Activated T-helper 1 cell treated with anti-CD3 and anti-CD28 coated beads, Interleukin-12 subunit alpha, Interleukin-12 subunit beta, Interleukin-2, Interleukin-4 antibody, amounts not matched to agents 30 ng/mL and 10 ng/mL and 1 ng/mL, durations not matched to agents 14 hours and 24 hours and 36 hours (primary cell): ENCODE measurements at regions of chr3 and their contacts with region 1.

Region 1: DNA sequence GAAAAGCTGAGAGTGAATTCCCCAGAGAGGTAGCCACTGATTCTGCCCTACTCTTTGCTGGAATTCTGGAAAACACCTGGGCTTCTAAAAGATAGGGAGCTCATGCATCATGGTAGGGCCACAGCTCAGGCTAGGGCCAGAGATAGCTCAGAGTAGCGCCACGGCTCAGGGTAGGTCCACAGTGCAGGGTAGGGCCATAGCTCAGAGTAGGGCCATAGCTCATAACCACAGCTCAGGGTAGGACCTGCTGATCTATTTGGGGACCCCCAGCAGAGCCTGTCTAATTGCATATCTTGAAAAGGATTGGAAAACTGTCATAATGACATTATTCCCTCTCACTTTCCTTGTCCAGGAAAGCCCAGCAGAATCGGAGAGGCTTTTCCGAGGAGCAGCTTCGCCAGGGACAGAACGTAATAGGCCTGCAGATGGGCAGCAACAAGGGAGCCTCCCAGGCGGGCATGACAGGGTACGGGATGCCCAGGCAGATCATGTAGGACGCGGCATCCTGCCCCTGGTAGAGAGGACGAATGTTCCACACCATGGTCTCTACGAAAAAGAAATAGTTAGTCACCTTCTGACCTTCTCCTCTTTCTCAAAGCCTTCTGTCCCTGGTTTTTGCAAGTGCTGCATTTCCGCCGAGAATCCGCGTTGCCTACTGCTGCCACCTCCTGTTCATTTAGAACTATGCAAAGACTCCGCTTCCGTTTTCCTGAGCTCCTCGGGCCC is 14.5 kb downstream of the TAGLN3 start:
- DNase-seq: peak; percentile 38
- H3K4me3 Mint-ChIP-seq: no peak overlapping the region
- H3K27ac Mint-ChIP-seq: peak overlapping the region; percentile 79
- H3K4me1 Mint-ChIP-seq: peaks cover 28% of the 10 kb centered on the region
- H3K27me3 Mint-ChIP-seq: no peaks in the 10 kb centered on the region

Region 2: GRCh38 chr3:111717601-111718000 is 295.6 kb before region 1 on chr3:
- intact Hi-C with region 1: loop called (anchors 1 kb)
- DNase-seq: peak; percentile 44
- H3K4me3 Mint-ChIP-seq: no peak overlapping the region
- H3K27ac Mint-ChIP-seq: peak overlapping the region; percentile 70
- H3K4me1 Mint-ChIP-seq: peaks cover 8% of the 10 kb centered on the region
- H3K27me3 Mint-ChIP-seq: no peaks in the 10 kb centered on the region

Region 3: DNA sequence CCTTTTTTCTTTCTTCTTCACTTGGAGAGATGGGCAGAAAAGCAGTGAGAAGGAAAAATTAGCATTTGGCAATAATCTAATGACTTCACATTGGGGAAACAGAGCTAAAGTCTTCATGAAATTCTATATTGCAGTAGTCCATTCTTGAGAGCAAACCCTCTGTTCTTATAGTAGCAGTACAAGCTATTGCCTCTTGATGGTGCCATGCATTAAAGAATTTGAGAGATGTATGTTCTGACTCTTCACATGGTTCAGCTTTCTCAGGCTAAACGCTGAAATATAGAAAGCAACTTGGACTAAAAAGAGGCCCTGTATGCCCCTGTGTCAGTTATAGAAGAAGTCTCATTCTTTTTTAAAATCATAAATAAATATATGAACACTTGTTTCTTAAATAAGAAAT is 118.1 kb before region 1 on chr3:
- intact Hi-C with region 1: loop called (anchors 2 kb)
- DNase-seq: no peak
- H3K4me3 Mint-ChIP-seq: no peak overlapping the region
- H3K27ac Mint-ChIP-seq: no peak overlapping the region
- H3K4me1 Mint-ChIP-seq: no peaks in the 10 kb centered on the region
- H3K27me3 Mint-ChIP-seq: no peaks in the 10 kb centered on the region

Region 4: DNA sequence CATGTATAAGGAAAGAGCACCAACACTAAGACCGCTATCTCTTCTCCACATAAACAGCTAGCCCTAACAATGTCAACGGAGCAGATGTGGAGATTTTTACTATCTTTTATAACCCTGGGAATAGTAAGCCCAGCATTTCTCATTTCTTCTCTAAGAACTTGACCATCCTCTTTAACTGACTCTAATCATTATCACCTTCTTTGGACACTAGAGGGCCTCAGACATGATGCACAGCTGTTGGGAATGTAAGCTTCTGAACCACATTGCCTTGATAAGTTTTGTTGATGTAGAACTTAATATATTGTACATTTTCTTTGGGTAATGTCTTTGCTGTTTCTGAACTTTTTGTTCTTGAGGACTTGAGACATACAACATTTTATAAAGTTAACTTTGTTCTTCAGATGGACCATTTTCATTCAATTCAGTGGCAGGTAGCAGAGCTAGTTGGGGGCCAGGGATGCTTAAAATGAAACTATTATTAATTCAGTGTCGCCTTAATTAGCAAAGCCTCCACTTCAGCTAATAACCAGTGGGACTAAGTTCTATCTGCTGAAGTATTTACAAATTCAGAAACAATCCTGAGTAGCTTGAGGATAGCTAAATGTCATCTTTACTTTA is 24.1 kb before region 1 on chr3:
- intact Hi-C with region 1: loop called (anchors 1 kb)
- DNase-seq: no peak
- H3K4me3 Mint-ChIP-seq: no peak overlapping the region
- H3K27ac Mint-ChIP-seq: no peak overlapping the region
- H3K4me1 Mint-ChIP-seq: peaks cover 44% of the 10 kb centered on the region
- H3K27me3 Mint-ChIP-seq: no peaks in the 10 kb centered on the region

Region 5: DNA sequence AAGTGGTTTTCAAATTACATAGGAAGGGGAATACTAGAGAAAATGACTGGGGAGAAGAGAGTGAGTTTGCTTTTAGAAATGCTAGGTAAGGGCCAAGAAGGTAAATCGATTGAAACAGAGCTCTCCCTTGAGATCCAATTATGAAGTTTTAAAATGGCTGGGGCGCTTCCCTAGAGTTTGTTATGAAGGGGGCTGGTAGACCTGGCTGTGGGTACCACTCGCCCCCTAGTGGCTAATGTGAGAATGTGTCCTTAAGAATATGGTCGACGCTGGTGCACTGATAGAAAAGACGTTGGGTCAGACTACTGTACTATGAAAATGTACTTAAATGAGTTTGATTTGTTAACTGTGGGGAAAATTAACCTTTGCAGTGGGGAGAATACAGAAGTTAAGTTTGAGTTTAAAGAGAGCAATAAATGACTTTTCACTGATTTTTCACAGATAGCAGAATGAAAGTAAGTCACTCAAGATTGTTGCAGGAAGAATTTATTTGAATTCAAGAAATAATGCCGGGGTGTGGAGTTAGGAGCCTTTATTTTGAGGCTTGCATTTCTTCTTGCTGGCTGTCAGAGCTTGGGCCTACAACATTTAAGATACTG is 30.5 kb after region 1 on chr3:
- intact Hi-C with region 1: loop called (anchors 2 kb)
- DNase-seq: peak; percentile 29
- H3K4me3 Mint-ChIP-seq: no peak overlapping the region
- H3K27ac Mint-ChIP-seq: no peak overlapping the region
- H3K4me1 Mint-ChIP-seq: no peaks in the 10 kb centered on the region
- H3K27me3 Mint-ChIP-seq: no peaks in the 10 kb centered on the region